ENCODE measurements at regions of chr10 and their contacts with region 1.

Region 1: GRCh38 chr10:97427525-97428179 is 1.7 kb downstream of the PGAM1 start:
- DNase-seq: no peak
- H3K4me3 ChIP-seq: peak overlapping the region; percentile 87
- H3K27ac ChIP-seq: peak overlapping the region; percentile 70
- H3K4me1 ChIP-seq: peaks cover 17% of the 10 kb centered on the region
- CTCF ChIP-seq: no peak

Region 2: DNA sequence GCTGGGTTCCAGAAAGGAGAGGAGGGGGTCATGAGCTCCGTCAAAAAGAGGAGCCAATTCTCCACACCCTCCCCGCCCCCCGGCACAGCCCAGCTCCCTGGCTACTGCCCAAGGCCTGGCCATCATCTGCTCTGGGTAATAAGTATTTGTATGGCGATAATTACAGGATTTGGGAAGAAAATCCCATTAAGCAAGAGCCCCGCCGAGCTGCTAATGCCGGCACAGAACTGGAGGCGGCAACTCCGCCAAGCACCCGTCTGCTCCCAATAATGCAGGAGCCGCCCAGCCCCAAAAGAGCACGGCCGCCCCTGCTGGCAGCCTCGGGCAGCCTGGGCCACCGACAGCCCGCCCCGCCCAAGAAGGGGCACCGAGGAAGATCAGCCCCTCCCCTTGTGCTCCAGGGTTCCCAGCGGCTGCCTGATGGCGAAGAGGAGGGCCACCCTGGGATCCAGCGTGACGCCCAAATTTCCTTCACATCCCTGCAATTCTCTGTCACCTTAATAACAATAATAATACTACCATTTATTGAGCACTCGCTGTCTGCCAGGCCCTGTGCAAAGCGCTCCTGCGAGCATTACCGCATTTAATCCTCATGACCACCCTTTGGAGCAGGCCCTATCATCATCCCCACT is 247.8 kb before region 1 on chr10:
- CTCF ChIA-PET with region 1: no interaction called
- POLR2A ChIA-PET with region 1: no interaction called
- intact Hi-C with region 1: no loop called
- DNase-seq: no peak
- H3K4me3 ChIP-seq: no peak overlapping the region
- H3K27ac ChIP-seq: no peak overlapping the region
- H3K4me1 ChIP-seq: no peaks in the 10 kb centered on the region
- CTCF ChIP-seq: 0 out of 2 replicates have a peak, but pooled peaks have one; percentile 14

Region 3: GRCh38 chr10:97334370-97335175 is 93.1 kb before region 1 on chr10 and contains the start of gene FRAT2:
- CTCF ChIA-PET with region 1: no interaction called
- POLR2A ChIA-PET with region 1: no interaction called
- intact Hi-C with region 1: no loop called
- DNase-seq: peak; percentile 93
- H3K4me3 ChIP-seq: peak within 1 kb of the TSS; percentile 76
- H3K27ac ChIP-seq: peak within 1 kb of the TSS; percentile 54
- H3K4me1 ChIP-seq: peaks cover 48% of the 10 kb centered on the region
- CTCF ChIP-seq: no peak
- total RNA-seq, gene FRAT2: 9.3 and 12.3 TPM in 2 replicates

Region 4: GRCh38 chr10:97445722-97446639 is 18.3 kb after region 1 on chr10 and contains the starts of genes EXOSC1 and ZDHHC16:
- CTCF ChIA-PET with region 1: no interaction called
- POLR2A ChIA-PET with region 1: interaction called, 4 read pairs
- intact Hi-C with region 1: loop called (anchors 2 kb)
- DNase-seq: peak; percentile 96
- H3K4me3 ChIP-seq: peak within 1 kb of the TSS; percentile 89
- H3K27ac ChIP-seq: peak within 1 kb of the TSS; percentile 36
- H3K4me1 ChIP-seq: peaks cover 28% of the 10 kb centered on the region
- CTCF ChIP-seq: peak; percentile 38
- total RNA-seq, gene EXOSC1: 46.8 and 59.6 TPM in 2 replicates
- total RNA-seq, gene ZDHHC16: 28.7 and 31.0 TPM in 2 replicates